Activated B cell treated with CpG ODN at 0.5 μM for 24 hours (primary cell): ENCODE measurements at regions of chr10 and their contacts with region 1.

Region 1: DNA sequence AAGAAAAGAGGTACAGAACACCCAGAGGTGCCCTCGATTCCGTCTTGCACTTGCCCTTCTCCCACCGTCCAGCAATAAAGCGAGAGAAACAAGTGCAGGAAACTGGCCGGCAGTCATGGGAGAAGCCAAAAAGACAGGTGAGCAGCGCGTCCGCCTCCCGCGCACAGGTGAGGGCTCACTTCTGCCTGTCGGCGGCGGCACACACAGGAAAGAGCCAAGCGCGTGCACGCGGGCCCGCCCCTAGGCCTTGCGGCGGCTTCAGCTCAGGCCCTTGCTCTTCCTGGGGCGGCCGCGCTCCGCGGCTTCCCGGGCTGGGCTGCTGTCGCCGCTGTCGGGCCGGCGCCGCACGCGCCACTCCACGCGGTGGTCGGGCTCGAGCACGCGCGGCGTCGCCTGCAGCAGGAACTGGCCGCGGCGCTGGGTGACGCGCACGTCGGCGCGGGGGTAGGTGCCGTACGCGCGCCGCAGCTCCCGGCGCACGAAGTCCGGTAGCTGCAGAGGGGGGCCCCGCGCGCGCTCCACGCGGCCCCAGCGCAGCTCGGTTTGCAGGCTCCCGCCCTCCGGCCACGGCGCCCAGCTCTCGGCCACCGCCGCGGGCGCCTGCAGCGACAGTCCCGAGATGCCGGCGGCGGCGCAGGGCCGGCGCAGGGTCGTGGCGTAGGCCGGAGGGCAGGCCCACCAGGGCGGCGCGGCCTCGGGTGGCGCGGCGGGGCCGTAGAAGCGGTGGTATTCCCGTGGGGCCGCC is 977 bp downstream of the C10orf95 start:
- DNase-seq: peak; percentile 84
- ATAC-seq: peak; percentile 82
- H3K4me3 Mint-ChIP-seq: peak overlapping the region; percentile 92
- H3K27ac Mint-ChIP-seq: peak overlapping the region; percentile 94
- H3K4me1 Mint-ChIP-seq: peaks cover 24% of the 10 kb centered on the region
- H3K27me3 Mint-ChIP-seq: no peaks in the 10 kb centered on the region
- CTCF ChIP-seq: no peak

Region 2: GRCh38 chr10:102375250-102375649 is 75.1 kb before region 1 on chr10:
- CTCF ChIA-PET with region 1: no interaction called
- POLR2A ChIA-PET with region 1: interaction called, 12 read pairs
- intact Hi-C with region 1: no loop called
- DNase-seq: no peak
- ATAC-seq: peak; percentile 66
- H3K4me3 Mint-ChIP-seq: no peak overlapping the region
- H3K27ac Mint-ChIP-seq: no peak overlapping the region
- H3K4me1 Mint-ChIP-seq: no peaks in the 10 kb centered on the region
- H3K27me3 Mint-ChIP-seq: no peaks in the 10 kb centered on the region
- CTCF ChIP-seq: no peak

Region 3: GRCh38 chr10:102399217-102400089 is 50.9 kb before region 1 on chr10:
- CTCF ChIA-PET with region 1: interaction called, 5 read pairs
- POLR2A ChIA-PET with region 1: interaction called, 104 read pairs
- intact Hi-C with region 1: loop called (anchors 1 kb)
- DNase-seq: peak; percentile 87
- ATAC-seq: peak; percentile 37
- H3K4me3 Mint-ChIP-seq: peak overlapping the region; percentile 94
- H3K27ac Mint-ChIP-seq: peak overlapping the region; percentile 97
- H3K4me1 Mint-ChIP-seq: peaks cover 54% of the 10 kb centered on the region
- H3K27me3 Mint-ChIP-seq: no peaks in the 10 kb centered on the region
- CTCF ChIP-seq: peak; percentile 95

Region 4: DNA sequence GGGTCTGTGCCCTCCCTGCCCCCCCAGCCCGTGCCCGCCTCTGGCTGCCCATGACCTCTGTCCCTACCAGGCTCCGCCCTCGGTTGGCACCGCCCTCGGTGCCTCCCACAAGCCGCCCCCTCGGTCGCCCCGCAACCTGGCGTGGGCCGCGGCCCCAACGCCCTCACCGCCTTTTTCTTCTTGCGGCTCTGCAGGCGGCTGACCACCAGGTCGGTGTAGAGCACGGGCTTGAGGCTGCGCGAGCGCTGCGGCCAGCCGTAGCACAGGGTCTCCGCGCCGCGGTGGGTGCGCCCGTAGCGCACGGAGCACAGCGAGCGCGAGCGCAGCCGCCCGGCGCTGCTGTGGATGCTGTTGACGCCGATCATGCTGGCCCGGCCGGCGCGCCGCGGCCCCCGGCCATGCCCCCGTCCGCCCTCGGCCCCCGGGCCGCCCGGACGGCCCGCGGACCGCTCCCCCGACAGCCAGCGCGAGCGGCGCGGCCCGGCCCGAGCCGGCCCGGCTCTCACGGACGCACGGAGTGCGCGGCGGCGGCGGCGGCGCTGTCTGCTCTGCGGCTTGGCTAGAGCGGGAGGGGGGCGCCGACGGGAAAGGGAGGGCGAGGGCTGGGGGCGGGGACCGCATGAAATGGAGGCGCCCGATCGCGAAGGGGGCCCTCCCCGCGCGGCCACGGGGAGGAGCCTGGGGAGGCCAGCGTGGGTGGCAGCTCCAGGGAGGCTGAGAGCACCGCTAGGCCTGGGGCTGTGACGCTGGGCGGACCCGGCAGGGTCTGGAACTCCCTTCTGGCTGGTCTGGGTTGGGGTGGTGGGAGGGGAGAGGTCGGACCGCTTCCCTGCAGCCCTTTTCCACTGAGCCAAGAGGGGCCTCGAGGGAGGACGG is 41.4 kb before region 1 on chr10:
- CTCF ChIA-PET with region 1: no interaction called
- POLR2A ChIA-PET with region 1: interaction called, 10 read pairs
- intact Hi-C with region 1: no loop called
- DNase-seq: peak; percentile 36
- ATAC-seq: peak; percentile 45
- H3K4me3 Mint-ChIP-seq: peak overlapping the region; percentile 59
- H3K27ac Mint-ChIP-seq: no peak overlapping the region
- H3K4me1 Mint-ChIP-seq: peaks cover 40% of the 10 kb centered on the region
- H3K27me3 Mint-ChIP-seq: peaks cover 42% of the 10 kb centered on the region
- CTCF ChIP-seq: no peak

Region 5: DNA sequence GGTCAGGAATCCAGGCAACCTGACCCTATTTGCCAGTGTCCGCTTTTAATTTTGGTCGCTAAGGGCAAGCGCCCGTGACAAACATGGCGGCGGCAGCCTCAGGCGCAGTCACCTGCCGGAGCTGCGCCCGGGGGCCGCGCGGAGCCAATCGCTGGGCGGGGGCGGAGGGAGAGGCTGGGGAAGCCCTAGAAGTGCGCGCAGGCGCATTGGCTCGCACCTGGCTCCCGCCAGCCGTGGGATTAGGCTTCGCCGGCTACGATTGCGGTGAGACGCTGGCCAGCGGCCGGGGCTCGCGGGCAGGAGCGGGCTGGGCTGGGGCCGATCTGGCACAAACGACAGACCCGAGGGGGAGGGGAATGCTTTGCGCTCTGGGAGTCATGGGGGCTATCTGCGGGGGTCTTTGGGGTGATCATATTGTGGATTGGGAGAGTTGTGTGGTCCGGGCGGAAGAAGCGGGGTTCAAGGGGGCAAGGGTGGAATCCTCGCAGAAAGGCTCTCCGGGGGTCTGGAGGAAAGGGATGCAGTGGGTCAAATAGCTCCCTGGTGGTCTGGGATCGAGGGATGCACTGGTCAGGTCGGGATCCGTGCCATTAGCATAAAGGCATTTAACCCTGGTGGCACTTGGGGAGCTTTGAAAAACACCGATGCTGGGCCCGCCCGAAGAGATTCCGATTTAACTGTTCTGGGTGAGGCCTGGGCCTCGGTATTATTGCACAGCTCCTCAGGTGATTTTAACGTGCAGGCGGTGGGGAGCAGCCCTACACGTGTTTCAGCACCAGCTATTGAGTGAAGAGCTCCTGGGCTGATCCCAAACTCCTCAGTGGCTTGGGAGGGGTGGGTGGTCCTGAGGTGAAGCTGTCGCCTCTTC is 11.1 kb after region 1 on chr10:
- CTCF ChIA-PET with region 1: no interaction called
- POLR2A ChIA-PET with region 1: interaction called, 51 read pairs
- intact Hi-C with region 1: loop called (anchors 1 kb)
- DNase-seq: peak; percentile 90
- ATAC-seq: peak; percentile 99
- H3K4me3 Mint-ChIP-seq: peak overlapping the region; percentile 88
- H3K27ac Mint-ChIP-seq: peak overlapping the region; percentile 85
- H3K4me1 Mint-ChIP-seq: peaks cover 31% of the 10 kb centered on the region
- H3K27me3 Mint-ChIP-seq: no peaks in the 10 kb centered on the region
- CTCF ChIP-seq: no peak

Region 6: GRCh38 chr10:102604379-102604960 is 154.1 kb after region 1 on chr10:
- CTCF ChIA-PET with region 1: no interaction called
- POLR2A ChIA-PET with region 1: no interaction called
- intact Hi-C with region 1: no loop called
- DNase-seq: no peak
- ATAC-seq: no peak
- H3K4me3 Mint-ChIP-seq: no peak overlapping the region
- H3K27ac Mint-ChIP-seq: no peak overlapping the region
- H3K4me1 Mint-ChIP-seq: no peaks in the 10 kb centered on the region
- H3K27me3 Mint-ChIP-seq: no peaks in the 10 kb centered on the region
- CTCF ChIP-seq: no peak